MCF 10A (cell line): ENCODE measurements at regions of chr22 and their contacts with region 1.

Region 1: GRCh38 chr22:32411829-32412592 is at the start of gene RTCB:
- DNase-seq: peak; percentile 90
- H3K4me3 Mint-ChIP-seq: peak within 1 kb of the TSS; percentile 90
- H3K27ac Mint-ChIP-seq: peak within 1 kb of the TSS; percentile 84
- H3K4me1 Mint-ChIP-seq: peaks cover 6% of the 10 kb centered on the region
- H3K27me3 Mint-ChIP-seq: peaks cover 17% of the 10 kb centered on the region
- CTCF ChIP-seq: no peak
- total RNA-seq, gene RTCB: 93.4 and 109 TPM in 2 replicates

Region 2: GRCh38 chr22:32218470-32218869 is 193.5 kb before region 1 on chr22:
- CTCF ChIA-PET with region 1: no interaction called
- POLR2A ChIA-PET with region 1: no interaction called
- intact Hi-C with region 1: no loop called
- DNase-seq: no peak
- H3K4me3 Mint-ChIP-seq: no peak overlapping the region
- H3K27ac Mint-ChIP-seq: no peak overlapping the region
- H3K4me1 Mint-ChIP-seq: peaks cover 6% of the 10 kb centered on the region
- H3K27me3 Mint-ChIP-seq: peaks cover 36% of the 10 kb centered on the region
- CTCF ChIP-seq: no peak

Region 3: GRCh38 chr22:32286290-32286840 is 125.6 kb before region 1 on chr22:
- CTCF ChIA-PET with region 1: no interaction called
- POLR2A ChIA-PET with region 1: no interaction called
- intact Hi-C with region 1: no loop called
- DNase-seq: peak; percentile 4
- H3K4me3 Mint-ChIP-seq: no peak overlapping the region
- H3K27ac Mint-ChIP-seq: no peak overlapping the region
- H3K4me1 Mint-ChIP-seq: peaks cover 13% of the 10 kb centered on the region
- H3K27me3 Mint-ChIP-seq: no peaks in the 10 kb centered on the region
- CTCF ChIP-seq: no peak

Region 4: GRCh38 chr22:32380996-32381395 is 31.0 kb before region 1 on chr22:
- CTCF ChIA-PET with region 1: no interaction called
- POLR2A ChIA-PET with region 1: no interaction called
- intact Hi-C with region 1: no loop called
- DNase-seq: no peak
- H3K4me3 Mint-ChIP-seq: no peak overlapping the region
- H3K27ac Mint-ChIP-seq: no peak overlapping the region
- H3K4me1 Mint-ChIP-seq: no peaks in the 10 kb centered on the region
- H3K27me3 Mint-ChIP-seq: peaks cover 7% of the 10 kb centered on the region
- CTCF ChIP-seq: no peak

Region 5: DNA sequence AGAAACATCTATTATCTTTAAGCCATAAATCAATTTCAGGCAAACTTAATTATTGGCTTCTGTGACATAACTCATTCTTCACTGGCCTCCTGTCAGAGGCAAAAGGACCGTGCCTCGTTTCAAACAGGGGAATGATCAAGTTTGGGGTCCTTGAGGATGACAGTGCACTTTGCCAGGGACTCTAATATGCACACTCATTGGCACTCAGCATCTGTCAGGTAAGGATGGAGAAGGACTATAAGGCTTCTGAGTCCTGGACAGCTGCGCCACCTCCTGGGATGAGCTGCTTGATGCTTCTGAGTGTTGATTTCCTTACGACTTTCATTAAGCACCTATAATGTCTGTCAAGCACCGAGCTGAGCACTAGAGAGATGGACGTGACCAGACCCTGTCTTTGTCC is 32.1 kb after region 1 on chr22:
- CTCF ChIA-PET with region 1: interaction called, 23 read pairs
- POLR2A ChIA-PET with region 1: interaction called, 5 read pairs
- intact Hi-C with region 1: no loop called
- DNase-seq: peak; percentile 25
- H3K4me3 Mint-ChIP-seq: no peak overlapping the region
- H3K27ac Mint-ChIP-seq: no peak overlapping the region
- H3K4me1 Mint-ChIP-seq: peaks cover 4% of the 10 kb centered on the region
- H3K27me3 Mint-ChIP-seq: no peaks in the 10 kb centered on the region
- CTCF ChIP-seq: peak; percentile 31

Region 6: DNA sequence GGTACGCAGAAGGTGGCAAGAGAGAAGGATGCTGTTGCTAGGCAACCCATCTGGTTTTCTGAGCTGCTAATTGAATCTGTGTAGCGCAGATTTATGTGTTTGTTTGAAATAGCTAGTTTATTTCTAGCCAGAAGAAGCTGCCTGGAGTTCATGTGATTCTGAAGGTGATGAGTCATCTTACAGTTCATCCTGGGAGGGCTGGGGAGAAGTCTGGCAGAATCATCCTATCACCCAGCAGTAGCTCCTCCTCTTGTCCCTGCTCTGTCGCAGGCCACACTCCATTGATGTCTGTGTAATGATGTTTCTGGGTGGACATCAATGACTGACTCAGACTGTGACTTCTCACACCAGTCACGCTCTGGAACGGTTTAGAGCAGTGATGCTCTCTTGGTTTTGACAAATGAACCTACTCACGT is 57.8 kb after region 1 on chr22:
- CTCF ChIA-PET with region 1: interaction called, 57 read pairs
- POLR2A ChIA-PET with region 1: interaction called, 85 read pairs
- intact Hi-C with region 1: loop called (anchors 2 kb)
- DNase-seq: no peak
- H3K4me3 Mint-ChIP-seq: no peak overlapping the region
- H3K27ac Mint-ChIP-seq: no peak overlapping the region
- H3K4me1 Mint-ChIP-seq: peaks cover 17% of the 10 kb centered on the region
- H3K27me3 Mint-ChIP-seq: peaks cover 20% of the 10 kb centered on the region
- CTCF ChIP-seq: no peak

Region 7: GRCh38 chr22:32474635-32475467 is 62.8 kb after region 1 on chr22 and contains the start of gene FBXO7:
- CTCF ChIA-PET with region 1: interaction called, 57 read pairs
- POLR2A ChIA-PET with region 1: interaction called, 85 read pairs
- intact Hi-C with region 1: loop called (anchors 2 kb)
- DNase-seq: peak; percentile 89
- H3K4me3 Mint-ChIP-seq: peak within 1 kb of the TSS; percentile 98
- H3K27ac Mint-ChIP-seq: peak within 1 kb of the TSS; percentile 96
- H3K4me1 Mint-ChIP-seq: peaks cover 12% of the 10 kb centered on the region
- H3K27me3 Mint-ChIP-seq: no peaks in the 10 kb centered on the region
- CTCF ChIP-seq: peak; percentile 13
- total RNA-seq, gene FBXO7: 59.8 and 76.9 TPM in 2 replicates

Region 8: DNA sequence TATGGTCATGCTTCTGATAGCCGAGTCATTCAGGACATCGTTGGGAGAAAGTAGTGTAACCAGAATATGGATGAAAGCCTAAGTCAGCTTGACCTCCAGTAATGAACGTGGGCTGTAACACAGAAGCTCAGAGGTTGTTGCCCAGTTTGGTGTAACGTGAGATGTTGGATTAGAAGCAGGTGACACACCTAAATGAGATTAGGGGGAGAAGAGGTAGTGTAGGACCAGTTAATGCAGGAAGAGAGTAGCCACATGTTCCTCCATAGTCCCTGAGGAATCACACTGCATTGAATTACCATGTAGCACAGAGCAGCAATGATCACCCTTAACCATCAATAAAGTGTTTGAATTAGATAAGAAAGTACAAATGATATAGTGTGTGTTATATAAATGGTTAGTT is 83.0 kb after region 1 on chr22:
- CTCF ChIA-PET with region 1: no interaction called
- POLR2A ChIA-PET with region 1: no interaction called
- intact Hi-C with region 1: no loop called
- DNase-seq: no peak
- H3K4me3 Mint-ChIP-seq: no peak overlapping the region
- H3K27ac Mint-ChIP-seq: no peak overlapping the region
- H3K4me1 Mint-ChIP-seq: no peaks in the 10 kb centered on the region
- H3K27me3 Mint-ChIP-seq: no peaks in the 10 kb centered on the region
- CTCF ChIP-seq: no peak